ENCODE measurements at regions of chr16 and their contacts with region 1.

Region 1: DNA sequence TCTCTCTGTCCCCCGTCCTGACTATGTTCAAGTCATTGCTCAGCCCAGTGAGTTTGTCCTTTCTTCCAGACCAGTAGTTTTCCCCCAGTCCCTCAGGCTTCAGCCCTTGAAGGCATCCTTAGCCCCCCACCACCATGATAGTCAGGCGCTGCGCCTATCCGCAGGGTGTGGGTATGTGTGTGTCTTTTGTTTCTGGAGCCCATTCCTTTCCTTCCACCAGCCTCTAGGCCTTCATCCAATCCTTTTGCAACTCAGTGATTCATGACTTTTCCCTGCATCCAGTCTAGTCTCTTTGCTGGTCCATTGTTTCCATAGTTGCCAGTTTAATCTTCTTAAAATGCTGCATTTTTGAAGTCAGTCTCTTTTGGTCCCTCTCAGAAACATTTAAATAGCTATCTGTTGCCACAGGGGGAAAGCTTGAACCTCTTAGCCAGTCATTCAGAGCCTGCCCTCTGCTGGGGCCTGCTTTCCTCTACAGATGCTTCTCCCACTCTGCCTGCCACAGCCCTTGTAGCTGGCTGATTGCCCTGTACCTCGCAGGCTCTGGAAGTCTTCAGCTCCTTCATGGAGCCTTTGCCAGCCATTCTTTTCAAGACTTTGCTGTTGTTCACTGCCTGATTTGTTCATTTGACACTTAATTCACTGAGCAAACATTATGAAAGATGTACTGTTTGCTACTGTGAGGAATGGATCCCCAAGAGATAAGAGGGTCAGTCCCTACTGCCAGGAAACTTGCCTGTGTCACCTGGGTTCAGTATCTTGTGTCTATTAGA is 55.9 kb upstream of the ADCY7 start:
- DNase-seq: peak; percentile 52
- H3K4me3 Mint-ChIP-seq: no peak overlapping the region
- H3K27ac Mint-ChIP-seq: peak overlapping the region; percentile 71
- H3K4me1 Mint-ChIP-seq: peaks cover 29% of the 10 kb centered on the region
- H3K27me3 Mint-ChIP-seq: no peaks in the 10 kb centered on the region

Region 2: GRCh38 chr16:49855280-49855821 is 355.1 kb before region 1 on chr16:
- intact Hi-C with region 1: loop called (anchors 2 kb)
- DNase-seq: peak; percentile 66
- H3K4me3 Mint-ChIP-seq: peak overlapping the region; percentile 39
- H3K27ac Mint-ChIP-seq: no peak overlapping the region
- H3K4me1 Mint-ChIP-seq: peaks cover 5% of the 10 kb centered on the region
- H3K27me3 Mint-ChIP-seq: peaks cover 47% of the 10 kb centered on the region

Region 3: GRCh38 chr16:50152807-50153452 is 57.5 kb before region 1 on chr16 and contains the start of gene TENT4B:
- intact Hi-C with region 1: loop called (anchors 1 kb)
- DNase-seq: peak; percentile 86
- H3K4me3 Mint-ChIP-seq: peak within 1 kb of the TSS; percentile 92
- H3K27ac Mint-ChIP-seq: peak within 1 kb of the TSS; percentile 94
- H3K4me1 Mint-ChIP-seq: peaks cover 41% of the 10 kb centered on the region
- H3K27me3 Mint-ChIP-seq: no peaks in the 10 kb centered on the region
- total RNA-seq, gene TENT4B: 19.8 and 20.0 TPM in 2 replicates

Region 4: GRCh38 chr16:50279504-50279865 is 69.0 kb after region 1 on chr16:
- intact Hi-C with region 1: loop called (anchors 1 kb)
- DNase-seq: no peak
- H3K4me3 Mint-ChIP-seq: peak overlapping the region; percentile 0
- H3K27ac Mint-ChIP-seq: no peak overlapping the region
- H3K4me1 Mint-ChIP-seq: peaks cover 86% of the 10 kb centered on the region
- H3K27me3 Mint-ChIP-seq: no peaks in the 10 kb centered on the region

Region 5: GRCh38 chr16:50509521-50510341 is 299.3 kb after region 1 on chr16:
- intact Hi-C with region 1: loop called (anchors 1 kb)
- DNase-seq: peak; percentile 15
- H3K4me3 Mint-ChIP-seq: no peak overlapping the region
- H3K27ac Mint-ChIP-seq: no peak overlapping the region
- H3K4me1 Mint-ChIP-seq: no peaks in the 10 kb centered on the region
- H3K27me3 Mint-ChIP-seq: peaks cover 10% of the 10 kb centered on the region

Region 6: GRCh38 chr16:50665128-50665878 is 454.9 kb after region 1 on chr16:
- intact Hi-C with region 1: loop called (anchors 1 kb)
- DNase-seq: peak; percentile 76
- H3K4me3 Mint-ChIP-seq: peak overlapping the region; percentile 66
- H3K27ac Mint-ChIP-seq: peak overlapping the region; percentile 68
- H3K4me1 Mint-ChIP-seq: peaks cover 43% of the 10 kb centered on the region
- H3K27me3 Mint-ChIP-seq: no peaks in the 10 kb centered on the region

Measured in activated T-helper 1 cell treated with anti-CD3 and anti-CD28 coated beads, Interleukin-12 subunit alpha, Interleukin-12 subunit beta, Interleukin-2, Interleukin-4 antibody, amounts not matched to agents 30 ng/mL and 10 ng/mL and 1 ng/mL, durations not matched to agents 14 hours and 24 hours and 36 hours (primary cell).